Caco-2 (cell line): ENCODE measurements at regions of chr13 and their contacts with region 1.

Region 1: DNA sequence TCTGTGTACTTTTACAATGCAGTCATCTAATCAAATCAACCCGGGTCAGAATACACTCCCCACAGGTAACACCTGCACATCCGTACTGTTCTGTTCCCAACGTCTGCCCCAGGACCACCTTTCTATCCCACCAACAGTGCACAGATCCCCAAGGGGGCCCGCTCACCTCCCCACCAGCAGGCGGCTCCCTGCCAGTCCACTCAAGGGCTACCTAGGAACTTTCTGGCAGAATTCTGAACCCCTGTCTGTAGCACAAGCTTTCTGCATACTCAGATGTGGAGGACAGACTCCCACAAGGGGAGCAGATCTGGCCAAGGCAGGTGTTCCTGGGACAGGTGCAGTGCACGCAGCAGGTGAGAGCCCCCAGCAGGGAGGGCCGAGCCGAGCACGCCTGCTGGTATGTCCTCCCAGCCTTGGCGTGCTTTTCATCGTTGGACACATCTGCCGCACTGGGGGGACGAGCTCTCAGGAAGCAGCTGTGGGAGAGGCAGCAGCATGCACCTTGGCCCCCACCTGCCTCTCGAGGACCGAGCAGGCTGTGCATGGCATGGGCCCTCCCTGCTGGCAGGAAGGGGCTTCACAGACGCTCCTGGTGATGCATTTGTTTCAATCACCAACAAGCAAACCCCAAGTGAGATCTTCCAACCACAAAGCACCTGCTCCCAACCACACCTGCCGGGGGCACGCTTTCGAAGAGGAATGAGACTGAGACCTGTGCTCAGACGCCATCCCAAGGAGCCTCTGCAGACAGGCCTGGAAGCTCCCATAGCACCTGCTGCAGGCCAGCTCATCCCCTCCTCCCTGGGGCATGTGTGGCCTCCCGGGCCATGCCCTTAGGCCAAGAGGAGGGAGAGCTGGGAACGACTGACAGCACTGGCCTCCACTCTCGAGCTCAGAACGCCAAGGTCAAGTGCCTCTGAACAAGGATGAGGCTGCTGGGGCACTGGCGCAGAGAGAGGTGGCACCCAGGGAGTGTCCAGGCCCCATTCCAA is 35.9 kb downstream of the RAB20 start:
- DNase-seq: no peak
- H3K4me3 ChIP-seq: no peak overlapping the region
- H3K4me3 Mint-ChIP-seq: no peak overlapping the region
- H3K27ac Mint-ChIP-seq: peak overlapping the region; percentile 84
- H3K4me1 ChIP-seq: peaks cover 41% of the 10 kb centered on the region
- H3K4me1 Mint-ChIP-seq: peaks cover 38% of the 10 kb centered on the region
- H3K27me3 ChIP-seq: no peaks in the 10 kb centered on the region
- H3K27me3 Mint-ChIP-seq: no peaks in the 10 kb centered on the region
- CTCF ChIP-seq: no peak

Region 2: GRCh38 chr13:110216398-110217041 is 309.1 kb before region 1 on chr13:
- CTCF ChIA-PET with region 1: no interaction called
- POLR2A ChIA-PET with region 1: no interaction called
- intact Hi-C with region 1: no loop called
- DNase-seq: no peak
- H3K4me3 ChIP-seq: no peak overlapping the region
- H3K4me3 Mint-ChIP-seq: no peak overlapping the region
- H3K27ac Mint-ChIP-seq: no peak overlapping the region
- H3K4me1 ChIP-seq: no peaks in the 10 kb centered on the region
- H3K4me1 Mint-ChIP-seq: peaks cover 13% of the 10 kb centered on the region
- H3K27me3 ChIP-seq: no peaks in the 10 kb centered on the region
- H3K27me3 Mint-ChIP-seq: no peaks in the 10 kb centered on the region
- CTCF ChIP-seq: no peak

Region 3: GRCh38 chr13:110485603-110486002 is 40.0 kb before region 1 on chr13:
- CTCF ChIA-PET with region 1: interaction called, 3 read pairs
- POLR2A ChIA-PET with region 1: no interaction called
- intact Hi-C with region 1: loop called (anchors 1 kb)
- DNase-seq: peak; percentile 89 to 95
- H3K4me3 ChIP-seq: no peak overlapping the region
- H3K4me3 Mint-ChIP-seq: peak overlapping the region; percentile 51
- H3K27ac Mint-ChIP-seq: peak overlapping the region; percentile 95
- H3K4me1 ChIP-seq: peaks cover 45% of the 10 kb centered on the region
- H3K4me1 Mint-ChIP-seq: peaks cover 25% of the 10 kb centered on the region
- H3K27me3 ChIP-seq: no peaks in the 10 kb centered on the region
- H3K27me3 Mint-ChIP-seq: no peaks in the 10 kb centered on the region
- CTCF ChIP-seq: no peak

Region 4: DNA sequence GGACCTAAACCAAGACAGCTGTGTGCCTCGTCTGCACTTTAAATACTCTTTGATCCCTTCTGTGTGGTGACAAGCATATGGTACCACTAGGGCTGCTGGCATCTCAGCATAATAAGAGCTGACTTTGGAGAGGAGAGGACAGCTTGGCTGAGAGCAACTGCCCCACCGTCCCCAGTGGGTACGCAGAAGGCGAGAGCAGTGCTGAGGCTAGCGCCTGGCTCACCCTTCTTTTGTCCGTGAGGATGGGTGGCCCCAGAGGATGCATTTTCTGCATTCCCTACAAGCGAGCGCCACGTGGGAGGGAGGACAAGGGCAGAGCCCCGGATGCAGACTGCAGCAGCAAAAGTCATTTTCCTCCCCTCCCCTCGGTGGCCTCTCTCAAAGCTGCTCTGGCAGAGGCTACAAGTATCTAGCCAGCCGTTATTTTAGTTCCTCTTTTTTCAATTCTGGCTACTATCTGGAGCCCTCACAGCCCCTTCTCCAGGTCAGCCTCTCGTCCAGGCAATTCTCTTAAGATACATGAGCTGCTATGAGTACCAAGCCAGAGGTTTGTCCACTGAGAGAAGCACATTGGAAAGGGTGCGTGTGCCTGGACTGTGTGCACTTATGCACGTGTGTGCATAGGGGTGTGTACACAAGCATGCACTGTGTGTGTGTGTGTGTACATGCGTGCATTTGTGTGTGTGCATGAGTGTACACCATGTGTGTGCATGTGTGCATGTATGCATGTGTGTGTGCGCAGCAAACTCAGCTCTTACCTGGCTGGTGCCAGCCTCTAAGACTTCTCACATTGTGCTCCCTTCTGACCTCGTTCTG is 15.4 kb before region 1 on chr13:
- CTCF ChIA-PET with region 1: interaction called, 4 read pairs
- POLR2A ChIA-PET with region 1: interaction called, 6 read pairs
- intact Hi-C with region 1: loop called (anchors 1 kb)
- DNase-seq: peak in 1 of 2 experiments; percentile 37
- H3K4me3 ChIP-seq: no peak overlapping the region
- H3K4me3 Mint-ChIP-seq: no peak overlapping the region
- H3K27ac Mint-ChIP-seq: peak overlapping the region; percentile 69
- H3K4me1 ChIP-seq: peaks cover 53% of the 10 kb centered on the region
- H3K4me1 Mint-ChIP-seq: peaks cover 43% of the 10 kb centered on the region
- H3K27me3 ChIP-seq: no peaks in the 10 kb centered on the region
- H3K27me3 Mint-ChIP-seq: no peaks in the 10 kb centered on the region
- CTCF ChIP-seq: no peak